ENCODE measurements at regions of chr21 and their contacts with region 1.

Region 1: GRCh38 chr21:33542640-33543504 is at the start of gene SON:
- DNase-seq: peak; percentile 95
- ATAC-seq: peak; percentile 94
- H3K4me3 ChIP-seq: peak within 1 kb of the TSS; percentile 96
- H3K27ac ChIP-seq: peak within 1 kb of the TSS; percentile 100
- H3K4me1 ChIP-seq: no peaks in the 10 kb centered on the region
- H3K27me3 ChIP-seq: no peaks in the 10 kb centered on the region
- CTCF ChIP-seq: no peak
- EP300 ChIP-seq: no peak
- POLR2A ChIP-seq: peak; percentile 89
- RAD21 ChIP-seq: no peak
- polyA plus RNA-seq, gene SON: 418 to 788 TPM

Region 2: GRCh38 chr21:33229784-33230544 is 312.9 kb before region 1 on chr21 and contains the start of gene IFNAR2:
- CTCF ChIA-PET with region 1: no interaction called
- POLR2A ChIA-PET with region 1: no interaction called
- RAD21 ChIA-PET with region 1: no interaction called
- SMC1A ChIA-PET with region 1: interaction called, 4 read pairs
- in situ Hi-C with region 1: no loop called
- intact Hi-C with region 1: loop called (anchors 10 kb)
- DNase-seq: no peak
- ATAC-seq: peak; percentile 75
- H3K4me3 ChIP-seq: peak within 1 kb of the TSS; percentile 100
- H3K27ac ChIP-seq: peak within 1 kb of the TSS; percentile 96
- H3K4me1 ChIP-seq: peaks cover 13% of the 10 kb centered on the region
- H3K27me3 ChIP-seq: no peaks in the 10 kb centered on the region
- CTCF ChIP-seq: no peak
- EP300 ChIP-seq: no peak
- POLR2A ChIP-seq: peak; percentile 64; the same call in 1 of the 2 replicates
- RAD21 ChIP-seq: no peak
- polyA plus RNA-seq, gene IFNAR2: 8.5 to 23.3 TPM

Region 3: GRCh38 chr21:33278721-33279120 is 264.2 kb before region 1 on chr21:
- CTCF ChIA-PET with region 1: no interaction called
- POLR2A ChIA-PET with region 1: no interaction called
- RAD21 ChIA-PET with region 1: no interaction called
- SMC1A ChIA-PET with region 1: no interaction called
- in situ Hi-C with region 1: no loop called
- intact Hi-C with region 1: no loop called
- DNase-seq: no peak
- ATAC-seq: no peak
- H3K4me3 ChIP-seq: no peak overlapping the region
- H3K27ac ChIP-seq: no peak overlapping the region
- H3K4me1 ChIP-seq: no peaks in the 10 kb centered on the region
- H3K27me3 ChIP-seq: no peaks in the 10 kb centered on the region
- CTCF ChIP-seq: no peak
- EP300 ChIP-seq: no peak
- POLR2A ChIP-seq: no peak
- RAD21 ChIP-seq: no peak

Region 4: DNA sequence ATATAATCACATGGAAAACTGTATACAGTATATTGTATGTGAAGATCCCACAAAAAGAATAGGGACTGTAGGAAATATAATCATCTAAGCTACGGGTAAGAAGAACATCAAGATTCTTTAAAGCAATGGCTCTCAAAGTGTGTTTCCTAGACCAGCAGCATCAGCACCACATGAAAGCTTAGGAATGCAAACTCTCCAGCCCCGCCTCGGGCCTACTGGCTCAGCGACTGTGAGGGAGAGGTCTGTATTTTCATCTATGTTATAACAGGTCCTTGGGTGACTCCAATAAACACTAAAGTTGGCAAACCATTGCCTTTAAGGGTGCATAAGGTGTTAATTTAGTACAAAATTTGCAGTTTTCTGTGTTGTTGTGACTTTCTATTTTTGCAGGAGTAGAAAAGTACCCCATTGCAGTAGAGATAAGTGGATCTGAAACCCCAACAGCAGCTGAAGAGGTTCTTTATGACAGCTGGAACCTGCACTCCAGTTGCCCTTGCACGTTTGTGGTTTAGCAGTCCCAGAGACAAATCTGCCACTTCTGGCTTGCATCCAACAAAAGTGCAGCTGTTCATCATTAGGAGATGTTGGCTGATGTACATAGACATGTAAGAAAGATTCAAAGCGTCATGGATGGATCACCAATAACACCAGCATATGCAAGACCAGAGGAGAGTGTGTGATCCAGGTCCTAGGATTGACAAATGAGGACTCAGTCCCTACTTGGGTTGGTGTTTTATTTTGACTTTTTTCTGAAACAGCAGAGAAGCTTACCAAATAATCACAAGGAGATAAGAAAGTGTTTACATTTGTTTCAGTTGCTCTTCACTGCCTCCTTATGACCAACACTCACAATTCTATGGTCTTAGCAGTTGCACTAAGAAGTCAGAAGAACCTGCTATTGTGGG is 234.0 kb before region 1 on chr21:
- CTCF ChIA-PET with region 1: no interaction called
- POLR2A ChIA-PET with region 1: no interaction called
- RAD21 ChIA-PET with region 1: no interaction called
- SMC1A ChIA-PET with region 1: no interaction called
- in situ Hi-C with region 1: no loop called
- intact Hi-C with region 1: no loop called
- DNase-seq: peak; percentile 98
- ATAC-seq: peak; percentile 96
- H3K4me3 ChIP-seq: peak overlapping the region; percentile 9; the same call in 1 of the 2 replicates
- H3K27ac ChIP-seq: peak overlapping the region; percentile 57
- H3K4me1 ChIP-seq: peaks cover 21% of the 10 kb centered on the region
- H3K27me3 ChIP-seq: no peaks in the 10 kb centered on the region
- CTCF ChIP-seq: peak in 2 of 3 experiments; percentile 5 to 33; a peak in 2 of 6 replicates
- EP300 ChIP-seq: peak; percentile 91; a peak in 3 of 4 replicates
- POLR2A ChIP-seq: no peak
- RAD21 ChIP-seq: 0 out of 2 replicates have a peak, but pooled peaks have one; percentile 17

Region 5: DNA sequence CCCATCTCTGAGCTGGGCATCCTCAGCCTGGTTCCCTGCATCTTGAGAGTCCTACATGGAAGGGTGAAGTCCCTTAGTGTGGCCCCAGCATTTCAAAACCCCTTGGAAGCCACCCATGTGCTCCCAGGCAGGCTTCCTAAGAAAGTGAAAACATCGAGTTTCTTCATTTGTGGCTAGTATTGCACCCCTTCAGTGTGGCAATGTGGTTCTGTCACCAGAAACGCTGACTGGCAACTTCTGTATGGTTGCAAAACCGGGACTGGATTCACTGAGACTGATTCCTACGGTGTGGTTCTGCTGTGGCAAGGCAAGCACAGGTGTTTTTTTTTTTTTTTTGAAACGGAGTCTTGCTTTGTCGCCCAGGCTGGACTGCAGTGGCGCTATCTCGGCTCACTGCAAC is 148.6 kb before region 1 on chr21:
- CTCF ChIA-PET with region 1: no interaction called
- POLR2A ChIA-PET with region 1: no interaction called
- RAD21 ChIA-PET with region 1: no interaction called
- SMC1A ChIA-PET with region 1: no interaction called
- in situ Hi-C with region 1: no loop called
- intact Hi-C with region 1: no loop called
- DNase-seq: no peak
- ATAC-seq: peak; percentile 81
- H3K4me3 ChIP-seq: no peak overlapping the region
- H3K27ac ChIP-seq: no peak overlapping the region
- H3K4me1 ChIP-seq: peaks cover 12% of the 10 kb centered on the region
- H3K27me3 ChIP-seq: no peaks in the 10 kb centered on the region
- CTCF ChIP-seq: no peak
- EP300 ChIP-seq: no peak
- POLR2A ChIP-seq: no peak
- RAD21 ChIP-seq: no peak

Region 6: GRCh38 chr21:33455686-33456446 is 87.0 kb before region 1 on chr21:
- CTCF ChIA-PET with region 1: no interaction called
- POLR2A ChIA-PET with region 1: no interaction called
- RAD21 ChIA-PET with region 1: no interaction called
- SMC1A ChIA-PET with region 1: no interaction called
- in situ Hi-C with region 1: no loop called
- intact Hi-C with region 1: no loop called
- DNase-seq: no peak
- ATAC-seq: peak; percentile 46
- H3K4me3 ChIP-seq: no peak overlapping the region
- H3K27ac ChIP-seq: no peak overlapping the region
- H3K4me1 ChIP-seq: no peaks in the 10 kb centered on the region
- H3K27me3 ChIP-seq: no peaks in the 10 kb centered on the region
- CTCF ChIP-seq: no peak
- EP300 ChIP-seq: no peak
- POLR2A ChIP-seq: no peak
- RAD21 ChIP-seq: no peak

Region 7: GRCh38 chr21:33479679-33480480 is 63.0 kb before region 1 on chr21 and contains the start of gene TMEM50B:
- CTCF ChIA-PET with region 1: interaction called, 9 read pairs
- POLR2A ChIA-PET with region 1: interaction called, 7 read pairs
- RAD21 ChIA-PET with region 1: interaction called, 7 read pairs
- SMC1A ChIA-PET with region 1: interaction called, 6 read pairs
- in situ Hi-C with region 1: no loop called
- intact Hi-C with region 1: loop called (anchors 5 kb)
- DNase-seq: peak; percentile 79
- ATAC-seq: peak; percentile 95
- H3K4me3 ChIP-seq: peak within 1 kb of the TSS; percentile 93
- H3K27ac ChIP-seq: peak within 1 kb of the TSS; percentile 82
- H3K4me1 ChIP-seq: peaks cover 3% of the 10 kb centered on the region; the same call in 1 of the 2 replicates
- H3K27me3 ChIP-seq: no peaks in the 10 kb centered on the region
- CTCF ChIP-seq: peak; percentile 25 to 52 (median 33); a peak in 4 of 6 replicates
- EP300 ChIP-seq: peak in 1 of 2 experiments; percentile 20; a peak in 1 of 4 replicates
- POLR2A ChIP-seq: peak; percentile 94
- RAD21 ChIP-seq: peak; percentile 12; the same call in 1 of the 2 replicates
- polyA plus RNA-seq, gene TMEM50B: 15.9 to 23.8 TPM

Region 8: GRCh38 chr21:33552999-33553598 is 10.2 kb after region 1 on chr21:
- CTCF ChIA-PET with region 1: interaction called, 8 read pairs
- POLR2A ChIA-PET with region 1: interaction called, 5 read pairs
- RAD21 ChIA-PET with region 1: no interaction called
- SMC1A ChIA-PET with region 1: interaction called, 23 read pairs
- in situ Hi-C with region 1: no loop called
- intact Hi-C with region 1: no loop called
- DNase-seq: no peak
- ATAC-seq: peak; percentile 5; the same call in 2 of the 3 replicates
- H3K4me3 ChIP-seq: no peak overlapping the region
- H3K27ac ChIP-seq: no peak overlapping the region
- H3K4me1 ChIP-seq: no peaks in the 10 kb centered on the region
- H3K27me3 ChIP-seq: no peaks in the 10 kb centered on the region
- CTCF ChIP-seq: no peak
- EP300 ChIP-seq: no peak
- POLR2A ChIP-seq: peak; percentile 51; the same call in 1 of the 2 replicates
- RAD21 ChIP-seq: no peak

Measured in GM12878 (cell line).